Psoas muscle (tissue), 8 donors: ENCODE measurements at regions of chr7 and their contacts with region 1.

Region 1: DNA sequence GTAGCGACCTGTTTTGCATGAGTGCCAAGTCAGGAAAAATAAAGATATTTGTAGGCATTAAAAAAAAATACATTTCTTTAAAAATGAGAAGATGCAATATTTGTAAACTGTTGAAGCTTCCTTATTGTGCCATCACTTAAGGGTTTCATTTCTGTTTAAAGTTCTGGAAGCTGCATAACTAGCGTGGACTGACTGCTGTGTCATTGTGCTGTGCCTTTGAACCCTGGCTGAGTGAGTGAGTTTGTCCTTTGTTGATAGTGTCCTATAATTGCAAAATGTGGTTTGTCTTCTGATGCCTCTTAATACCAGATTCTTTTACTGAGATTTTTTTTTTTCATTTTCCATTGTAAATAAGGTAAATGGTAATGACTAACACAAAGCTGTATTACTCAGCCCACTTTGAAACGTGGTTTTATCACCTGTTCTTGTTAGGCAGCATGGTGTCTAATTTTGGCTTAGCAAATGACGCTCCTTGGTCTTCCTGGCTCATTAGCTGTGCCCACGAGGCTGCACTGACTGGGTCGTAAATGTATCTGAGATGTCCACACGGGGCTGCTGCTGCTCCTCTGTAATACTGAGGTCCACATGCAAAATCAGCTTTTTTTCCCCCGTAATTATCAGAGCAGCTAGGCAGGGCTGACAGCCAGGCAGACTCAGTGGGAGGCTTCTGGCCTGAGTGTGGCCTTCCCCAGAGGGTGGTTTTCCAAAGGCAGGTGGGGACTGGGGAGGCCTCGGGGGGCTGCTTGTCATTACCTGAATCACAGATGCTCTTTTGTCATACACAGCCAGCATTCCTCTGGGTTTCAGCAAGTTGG is 14.8 kb downstream of the ZSCAN25 start:
- DNase-seq: peak in 1 of 2 donors; percentile 78
- ATAC-seq: peak; percentile 94 to 99 (median 98)
- H3K4me3 ChIP-seq: no peak overlapping the region
- H3K27ac ChIP-seq: peak overlapping the region; percentile 79
- H3K4me1 ChIP-seq: peaks cover 11% of the 10 kb centered on the region
- H3K27me3 ChIP-seq: no peaks in the 10 kb centered on the region
- CTCF ChIP-seq: peak; percentile 59

Region 2: DNA sequence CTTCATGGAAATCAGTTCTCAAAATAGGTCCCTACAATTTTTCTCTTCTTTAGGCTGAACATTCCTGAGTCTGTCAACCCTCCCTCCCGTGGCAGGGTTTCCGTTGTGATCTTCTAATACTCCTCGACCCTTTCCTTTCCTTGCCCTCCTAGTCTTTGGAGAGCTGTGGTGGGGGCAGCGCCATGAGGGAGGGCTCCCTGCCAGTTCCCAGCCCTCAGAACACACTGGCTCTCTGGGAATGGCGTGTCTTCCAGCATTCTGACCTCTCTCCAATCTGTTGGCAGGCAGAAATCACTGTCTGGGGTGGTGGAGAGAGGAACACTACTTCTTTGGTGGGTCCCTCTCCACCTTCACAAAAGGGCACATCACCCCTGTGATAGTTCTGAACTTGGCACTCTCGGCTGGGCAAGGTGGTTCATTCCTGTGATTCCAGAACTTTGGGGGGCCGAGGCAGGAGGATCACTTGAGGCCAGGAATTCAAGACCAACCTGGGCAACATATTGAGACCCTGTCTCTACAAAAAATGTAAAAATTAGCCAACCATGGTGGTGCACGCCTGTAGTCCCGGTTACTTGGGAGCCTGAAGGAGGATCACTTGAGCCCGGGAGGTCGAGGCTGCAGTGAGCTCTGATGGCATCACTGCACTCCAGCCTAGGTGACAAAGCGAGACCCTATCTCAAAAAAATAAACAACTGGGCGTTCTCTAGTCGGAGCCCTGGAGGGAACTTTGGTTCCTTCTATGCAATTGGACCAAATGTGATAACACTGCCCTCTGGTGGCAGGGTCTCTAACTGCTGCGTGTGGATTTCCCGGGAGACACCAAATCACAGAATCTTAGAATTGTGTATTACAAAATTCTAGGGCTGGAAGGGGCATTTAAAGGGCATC is 318.9 kb before region 1 on chr7:
- intact Hi-C with region 1: no loop called
- DNase-seq: peak; percentile 60 to 77
- ATAC-seq: peak; percentile 68 to 88 (median 74)
- H3K4me3 ChIP-seq: no peak overlapping the region
- H3K27ac ChIP-seq: no peak overlapping the region
- H3K4me1 ChIP-seq: no peaks in the 10 kb centered on the region
- H3K27me3 ChIP-seq: no peaks in the 10 kb centered on the region
- CTCF ChIP-seq: peak; percentile 92

Region 3: DNA sequence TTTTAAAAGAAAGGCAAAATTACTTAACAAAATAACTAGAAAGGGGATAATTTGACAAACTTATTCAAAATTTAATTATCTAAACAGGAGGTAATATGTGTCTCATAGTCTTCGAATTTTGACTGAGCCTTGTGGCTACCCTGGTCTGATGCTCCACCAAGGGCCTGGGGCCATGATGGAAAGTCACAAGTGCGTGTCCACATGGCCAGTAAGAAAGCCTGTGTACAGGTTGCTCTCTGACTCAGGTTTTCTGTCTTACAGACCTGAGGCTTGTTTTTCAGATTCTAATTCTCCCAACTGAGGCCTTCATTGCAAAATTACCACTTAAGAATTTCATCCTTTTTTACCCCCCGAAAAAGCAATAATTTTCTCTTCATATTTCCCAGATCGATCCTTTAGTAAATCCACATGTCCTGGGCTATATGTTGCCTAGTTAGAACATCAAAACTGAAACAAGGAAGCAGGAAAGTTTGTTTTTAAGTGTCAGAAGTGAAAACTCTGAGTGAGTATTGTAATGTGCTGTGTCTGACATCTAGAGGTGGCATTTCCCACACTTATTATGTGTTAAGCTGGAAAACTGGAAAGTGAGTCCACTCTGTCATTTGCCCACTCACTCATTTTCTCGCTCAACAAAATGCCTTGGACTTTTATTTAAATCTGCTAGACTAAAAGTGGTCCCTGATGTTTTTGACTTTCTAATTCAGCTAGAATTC is 206.3 kb after region 1 on chr7:
- intact Hi-C with region 1: loop called (anchors 2 to 10 kb)
- DNase-seq: no peak
- ATAC-seq: peak in 2 of 4 donors; percentile 47 to 61
- H3K4me3 ChIP-seq: no peak overlapping the region
- H3K27ac ChIP-seq: no peak overlapping the region
- H3K4me1 ChIP-seq: no peaks in the 10 kb centered on the region
- H3K27me3 ChIP-seq: no peaks in the 10 kb centered on the region
- CTCF ChIP-seq: peak; percentile 32